Heart right ventricle (tissue), 16 donors: ENCODE measurements at regions of chr2 and their contacts with region 1.

Region 1: GRCh38 chr2:85797921-85798320 is 44.1 kb downstream of the ATOH8 start:
- DNase-seq: no peak
- ATAC-seq: peak; percentile 18 to 74 (median 48)
- H3K4me3 ChIP-seq: no peak overlapping the region
- H3K27ac ChIP-seq: peak overlapping the region in 4 of 10 donors; percentile 4 to 79 (median 71)
- H3K4me1 ChIP-seq: peaks cover 30 to 67% (median 50%) of the 10 kb centered on the region in 9 donors
- H3K27me3 ChIP-seq: no peaks in the 10 kb centered on the region
- CTCF ChIP-seq: peak; percentile 32 to 76 (median 60)

Region 2: DNA sequence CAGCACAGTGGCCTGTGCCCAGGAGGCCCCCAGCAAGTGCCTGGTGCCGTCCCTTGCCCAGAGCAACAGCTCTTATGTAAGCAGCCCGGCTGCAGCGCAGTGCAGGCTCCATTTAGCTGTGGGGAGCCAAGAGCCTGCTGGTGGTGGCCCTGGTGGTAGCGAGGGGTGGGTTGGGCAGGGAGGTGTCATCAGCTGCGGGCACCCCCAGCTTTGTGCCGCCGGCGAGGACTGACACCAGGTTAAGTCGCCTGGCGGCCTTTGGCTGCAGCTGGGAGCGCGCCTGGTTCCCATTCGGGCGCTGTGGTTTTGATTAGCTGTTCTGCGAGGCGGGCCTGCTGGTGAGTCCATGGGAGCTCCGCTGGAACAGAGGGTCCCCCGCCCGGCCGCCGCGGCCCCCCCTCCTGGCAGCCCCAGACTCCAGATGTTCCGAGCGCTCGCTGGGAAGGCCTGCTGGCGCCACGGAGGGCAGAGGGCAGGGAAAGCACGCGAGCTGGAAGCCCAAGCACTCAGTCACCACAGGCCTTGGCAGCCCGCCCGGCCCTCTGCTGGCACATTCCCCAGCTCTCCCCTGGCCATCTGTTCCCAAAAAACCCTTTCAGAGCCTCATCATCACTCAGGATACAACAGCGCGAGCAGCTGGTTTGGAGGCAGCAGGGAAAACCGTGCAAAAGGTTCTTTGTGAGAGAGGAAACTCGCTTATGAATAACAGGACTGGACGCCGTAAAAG is 25.7 kb before region 1 on chr2:
- intact Hi-C with region 1: loop called in 2 of 10 experiments (anchors 2 kb)
- DNase-seq: peak; percentile 98 to 99
- ATAC-seq: peak; percentile 88 to 93 (median 91)
- H3K4me3 ChIP-seq: peak overlapping the region in 8 of 10 donors; percentile 6 to 45 (median 28)
- H3K27ac ChIP-seq: peak overlapping the region; percentile 86 to 96 (median 91)
- H3K4me1 ChIP-seq: peaks cover 73 to 98% (median 93%) of the 10 kb centered on the region in 9 donors
- H3K27me3 ChIP-seq: peaks cover 0 to 5% (median 0%) of the 10 kb centered on the region in 7 donors
- CTCF ChIP-seq: peak in 4 of 9 donors; percentile 24 to 51 (median 36)

Region 3: GRCh38 chr2:85777441-85777861 is 20.5 kb before region 1 on chr2:
- intact Hi-C with region 1: loop called in 2 of 10 experiments (anchors 2 kb)
- DNase-seq: peak in 1 of 2 donors; percentile 57
- ATAC-seq: peak; percentile 5 to 54 (median 33)
- H3K4me3 ChIP-seq: peak overlapping the region in 2 of 10 donors; percentile 6 to 9
- H3K27ac ChIP-seq: peak overlapping the region; percentile 23 to 96 (median 89)
- H3K4me1 ChIP-seq: peaks cover 47 to 92% (median 80%) of the 10 kb centered on the region in 9 donors
- H3K27me3 ChIP-seq: no peaks in the 10 kb centered on the region
- CTCF ChIP-seq: no peak